ENCODE measurements at regions of chr10 and their contacts with region 1.

Region 1: GRCh38 chr10:67259319-67259929 is 333.6 kb downstream of the LRRTM3 start:
- DNase-seq: peak; percentile 43 to 68
- H3K4me3 ChIP-seq: no peak overlapping the region
- H3K4me3 Mint-ChIP-seq: peak overlapping the region; percentile 51
- H3K27ac Mint-ChIP-seq: peak overlapping the region; percentile 37
- H3K4me1 ChIP-seq: peaks cover 48% of the 10 kb centered on the region
- H3K4me1 Mint-ChIP-seq: peaks cover 44% of the 10 kb centered on the region
- H3K27me3 ChIP-seq: no peaks in the 10 kb centered on the region
- H3K27me3 Mint-ChIP-seq: no peaks in the 10 kb centered on the region
- CTCF ChIP-seq: no peak

Region 2: GRCh38 chr10:67115970-67116369 is 143.5 kb before region 1 on chr10:
- CTCF ChIA-PET with region 1: no interaction called
- POLR2A ChIA-PET with region 1: no interaction called
- intact Hi-C with region 1: loop called (anchors 2 kb)
- DNase-seq: no peak
- H3K4me3 ChIP-seq: no peak overlapping the region
- H3K4me3 Mint-ChIP-seq: no peak overlapping the region
- H3K27ac Mint-ChIP-seq: no peak overlapping the region
- H3K4me1 ChIP-seq: peaks cover 10% of the 10 kb centered on the region
- H3K4me1 Mint-ChIP-seq: peaks cover 9% of the 10 kb centered on the region
- H3K27me3 ChIP-seq: no peaks in the 10 kb centered on the region
- H3K27me3 Mint-ChIP-seq: no peaks in the 10 kb centered on the region
- CTCF ChIP-seq: no peak

Region 3: DNA sequence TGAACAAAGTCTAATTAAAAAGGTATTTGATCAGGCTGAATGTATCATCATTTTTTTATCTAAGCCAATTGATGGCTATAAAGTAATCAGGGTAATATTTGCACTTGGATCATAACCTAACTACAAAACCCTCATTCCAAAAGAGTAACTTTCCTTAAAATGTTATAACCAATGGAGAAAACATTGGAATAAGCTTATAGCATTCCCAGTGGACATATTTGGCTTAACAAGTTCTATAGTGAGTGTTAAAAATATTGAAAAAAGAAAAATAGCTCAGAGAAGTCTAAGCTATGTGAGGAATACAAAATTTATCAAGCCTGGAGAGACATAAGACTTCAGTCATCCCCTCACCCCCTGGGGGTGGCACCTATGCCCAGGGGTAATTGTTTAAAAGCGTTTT is 25.2 kb after region 1 on chr10:
- CTCF ChIA-PET with region 1: interaction called, 4 read pairs
- POLR2A ChIA-PET with region 1: interaction called, 4 read pairs
- intact Hi-C with region 1: loop called (anchors 1 kb)
- DNase-seq: no peak
- H3K4me3 ChIP-seq: no peak overlapping the region
- H3K4me3 Mint-ChIP-seq: no peak overlapping the region
- H3K27ac Mint-ChIP-seq: no peak overlapping the region
- H3K4me1 ChIP-seq: peaks cover 46% of the 10 kb centered on the region
- H3K4me1 Mint-ChIP-seq: peaks cover 36% of the 10 kb centered on the region
- H3K27me3 ChIP-seq: no peaks in the 10 kb centered on the region
- H3K27me3 Mint-ChIP-seq: no peaks in the 10 kb centered on the region
- CTCF ChIP-seq: peak in 1 of 2 experiments; percentile 21

Region 4: GRCh38 chr10:67492317-67493019 is 233.0 kb after region 1 on chr10:
- CTCF ChIA-PET with region 1: no interaction called
- POLR2A ChIA-PET with region 1: no interaction called
- intact Hi-C with region 1: loop called (anchors 1 kb)
- DNase-seq: no peak
- H3K4me3 ChIP-seq: no peak overlapping the region
- H3K4me3 Mint-ChIP-seq: no peak overlapping the region
- H3K27ac Mint-ChIP-seq: peak overlapping the region; percentile 14
- H3K4me1 ChIP-seq: peaks cover 10% of the 10 kb centered on the region
- H3K4me1 Mint-ChIP-seq: peaks cover 17% of the 10 kb centered on the region
- H3K27me3 ChIP-seq: no peaks in the 10 kb centered on the region
- H3K27me3 Mint-ChIP-seq: no peaks in the 10 kb centered on the region
- CTCF ChIP-seq: no peak